ENCODE measurements at regions of chr13 and their contacts with region 1.

Region 1: GRCh38 chr13:91078093-91078679 is 269.3 kb upstream of the MIR17HG start:
- DNase-seq: no peak
- H3K4me3 ChIP-seq: no peak overlapping the region
- H3K27ac ChIP-seq: no peak overlapping the region
- H3K27me3 ChIP-seq: peaks cover 0 to 14% (median 0%) of the 10 kb centered on the region in 45 donors
- CTCF ChIP-seq: peak in 53 of 56 donors; percentile 22 to 65 (median 45)

Region 2: GRCh38 chr13:90979059-90979458 is 99.1 kb before region 1 on chr13:
- intact Hi-C with region 1: no loop called
- DNase-seq: no peak
- H3K4me3 ChIP-seq: no peak overlapping the region
- H3K27ac ChIP-seq: no peak overlapping the region
- H3K27me3 ChIP-seq: peaks cover 0 to 7% (median 0%) of the 10 kb centered on the region in 45 donors
- CTCF ChIP-seq: no peak

Region 3: GRCh38 chr13:91001371-91001770 is 76.8 kb before region 1 on chr13:
- intact Hi-C with region 1: no loop called
- DNase-seq: no peak
- H3K4me3 ChIP-seq: no peak overlapping the region
- H3K27ac ChIP-seq: no peak overlapping the region
- H3K27me3 ChIP-seq: no peaks in the 10 kb centered on the region
- CTCF ChIP-seq: no peak

Region 4: GRCh38 chr13:91185294-91185863 is 107.2 kb after region 1 on chr13:
- intact Hi-C with region 1: loop called in 1 of 2 experiments (anchors 10 kb)
- DNase-seq: no peak
- H3K4me3 ChIP-seq: peak overlapping the region in 1 of 59 donors; percentile 18
- H3K27ac ChIP-seq: no peak overlapping the region
- H3K27me3 ChIP-seq: peaks cover 0 to 20% (median 0%) of the 10 kb centered on the region in 45 donors
- CTCF ChIP-seq: peak in 53 of 56 donors; percentile 22 to 72 (median 54)